PC-3 (cell line): ENCODE measurements at regions of chr13 and their contacts with region 1.

Region 1: GRCh38 chr13:67167420-67167819 is 62.7 kb downstream of the PCDH9 start:
- DNase-seq: peak; percentile 33
- ATAC-seq: peak; percentile 83
- H3K4me3 ChIP-seq: no peak overlapping the region
- H3K27ac ChIP-seq: peak overlapping the region; percentile 31
- H3K4me1 ChIP-seq: peaks cover 4% of the 10 kb centered on the region; the same call in 1 of the 2 replicates
- H3K27me3 ChIP-seq: no peaks in the 10 kb centered on the region
- CTCF ChIP-seq: no peak

Region 2: GRCh38 chr13:67119481-67119883 is 47.9 kb before region 1 on chr13:
- CTCF ChIA-PET with region 1: no interaction called
- POLR2A ChIA-PET with region 1: no interaction called
- intact Hi-C with region 1: loop called (anchors 5 kb)
- DNase-seq: peak; percentile 79
- ATAC-seq: peak; percentile 89
- H3K4me3 ChIP-seq: no peak overlapping the region
- H3K27ac ChIP-seq: peak overlapping the region; percentile 53; the same call in 1 of the 2 replicates
- H3K4me1 ChIP-seq: peaks cover 27% of the 10 kb centered on the region
- H3K27me3 ChIP-seq: no peaks in the 10 kb centered on the region
- CTCF ChIP-seq: no peak

Region 3: DNA sequence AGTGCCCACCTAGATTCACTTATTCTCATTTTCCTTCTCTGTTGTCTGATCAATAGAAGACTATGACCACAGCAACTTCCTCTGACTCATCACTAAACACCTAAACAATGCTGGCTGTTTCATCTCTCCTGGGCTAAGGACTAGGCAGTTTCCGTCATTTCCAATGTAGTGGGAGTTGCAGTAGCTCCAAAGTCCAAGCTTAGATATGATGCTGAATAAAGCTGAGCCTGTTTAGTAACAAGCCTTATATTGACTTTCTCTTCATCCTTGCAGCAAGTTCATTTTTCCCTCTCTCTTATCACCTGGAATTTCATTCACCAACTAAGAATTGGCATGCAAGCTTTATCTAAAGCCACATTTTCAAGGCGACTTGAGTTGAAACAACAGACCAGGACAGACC is 116.2 kb after region 1 on chr13:
- CTCF ChIA-PET with region 1: no interaction called
- POLR2A ChIA-PET with region 1: no interaction called
- intact Hi-C with region 1: no loop called
- DNase-seq: peak; percentile 3
- ATAC-seq: no peak
- H3K4me3 ChIP-seq: no peak overlapping the region
- H3K27ac ChIP-seq: no peak overlapping the region
- H3K4me1 ChIP-seq: no peaks in the 10 kb centered on the region
- H3K27me3 ChIP-seq: no peaks in the 10 kb centered on the region
- CTCF ChIP-seq: no peak

Region 4: DNA sequence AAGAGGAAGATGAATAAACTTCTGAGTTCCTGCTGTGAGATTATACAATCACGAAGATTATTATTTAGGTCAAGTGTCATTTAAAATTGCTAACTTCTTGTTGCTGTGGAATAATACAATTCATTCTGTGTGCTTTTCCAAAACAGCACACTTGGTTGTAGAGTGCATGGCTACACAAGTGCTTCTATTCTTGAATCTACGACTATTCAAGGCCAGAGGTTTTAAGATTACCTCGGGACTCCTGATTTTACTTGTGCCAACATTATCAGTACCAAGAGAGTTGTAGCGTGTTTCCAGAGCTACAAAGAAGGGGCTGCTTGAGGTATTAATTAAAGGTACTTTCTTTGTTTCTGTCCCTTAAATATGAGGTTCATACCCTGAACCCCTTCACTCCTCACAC is 296.7 kb after region 1 on chr13:
- CTCF ChIA-PET with region 1: no interaction called
- POLR2A ChIA-PET with region 1: no interaction called
- intact Hi-C with region 1: no loop called
- DNase-seq: no peak
- ATAC-seq: no peak
- H3K4me3 ChIP-seq: no peak overlapping the region
- H3K27ac ChIP-seq: no peak overlapping the region
- H3K4me1 ChIP-seq: no peaks in the 10 kb centered on the region
- H3K27me3 ChIP-seq: no peaks in the 10 kb centered on the region
- CTCF ChIP-seq: no peak